ENCODE measurements at regions of chr12 and their contacts with region 1.

Region 1: GRCh38 chr12:62205346-62205745 is 54.9 kb upstream of the USP15 start:
- DNase-seq: no peak
- H3K4me3 ChIP-seq: no peak overlapping the region
- H3K27ac ChIP-seq: no peak overlapping the region
- H3K4me1 ChIP-seq: no peaks in the 10 kb centered on the region
- H3K27me3 ChIP-seq: no peaks in the 10 kb centered on the region
- CTCF ChIP-seq: no peak
- EP300 ChIP-seq: no peak
- POLR2A ChIP-seq: no peak
- RAD21 ChIP-seq: no peak

Region 2: DNA sequence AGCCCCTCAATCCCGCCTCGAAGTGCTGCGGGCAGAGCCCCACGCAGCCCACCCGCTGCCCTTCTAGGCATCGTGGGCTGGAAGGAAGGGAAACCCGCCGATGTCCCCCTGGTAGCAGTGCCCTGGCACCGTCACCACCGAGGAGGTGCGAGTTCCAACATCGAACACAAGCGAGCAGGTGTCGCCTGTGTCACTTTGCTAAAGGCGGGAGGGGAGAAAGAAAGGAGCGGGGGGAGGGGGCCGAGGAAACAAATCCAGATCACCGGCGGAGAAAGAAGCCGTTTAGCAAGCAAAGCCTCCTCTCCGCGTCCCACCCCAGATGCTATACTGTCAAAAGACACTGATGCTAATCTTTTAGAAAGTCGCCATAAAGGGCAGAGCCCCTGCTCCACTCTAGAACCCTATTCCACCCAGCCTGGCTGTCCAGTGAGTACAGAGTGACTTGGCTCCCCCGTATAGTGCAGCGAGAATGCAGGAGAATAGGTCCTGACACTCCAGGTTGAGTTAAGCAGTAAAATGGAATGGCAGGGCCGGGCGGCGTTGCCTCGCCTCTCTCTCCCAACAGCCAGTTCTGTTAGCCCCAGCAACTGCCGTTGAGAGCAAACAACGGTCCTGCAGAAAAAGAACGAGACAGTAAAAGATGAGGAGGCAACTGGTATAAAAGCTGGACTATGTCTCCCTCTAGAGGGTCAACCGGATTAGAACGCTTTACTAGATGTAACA is 13.0 kb before region 1 on chr12:
- CTCF ChIA-PET with region 1: interaction called, 16 read pairs
- POLR2A ChIA-PET with region 1: interaction called, 3 read pairs
- DNase-seq: peak in 1 of 2 experiments; percentile 65
- H3K4me3 ChIP-seq: peak overlapping the region; percentile 35 to 71 (median 60)
- H3K27ac ChIP-seq: no peak overlapping the region
- H3K4me1 ChIP-seq: peaks cover 4 to 8% (median 5%) of the 10 kb centered on the region in 4 experiments; a peak in 6 of 7 replicates
- H3K27me3 ChIP-seq: peaks cover 15 to 36% (median 29%) of the 10 kb centered on the region in 4 experiments; a peak in 6 of 7 replicates
- CTCF ChIP-seq: peak in 2 of 3 experiments; percentile 64 to 65; a peak in 3 of 4 replicates
- EP300 ChIP-seq: no peak
- POLR2A ChIP-seq: no peak
- RAD21 ChIP-seq: peak; percentile 93 to 95